ENCODE measurements at regions of chr21 and their contacts with region 1.

Region 1: GRCh38 chr21:37563641-37564340 is 197.2 kb downstream of the DYRK1A start:
- DNase-seq: peak; percentile 91
- H3K4me3 Mint-ChIP-seq: peak overlapping the region; percentile 86
- H3K27ac Mint-ChIP-seq: peak overlapping the region; percentile 98
- H3K4me1 Mint-ChIP-seq: peaks cover 17% of the 10 kb centered on the region
- H3K27me3 Mint-ChIP-seq: peaks cover 6% of the 10 kb centered on the region

Region 2: GRCh38 chr21:36966066-36966820 is 597.5 kb before region 1 on chr21 and contains the start of gene HLCS:
- intact Hi-C with region 1: loop called (anchors 10 kb)
- DNase-seq: peak; percentile 66
- H3K4me3 Mint-ChIP-seq: peak within 1 kb of the TSS; percentile 84
- H3K27ac Mint-ChIP-seq: peak within 1 kb of the TSS; percentile 80
- H3K4me1 Mint-ChIP-seq: peaks cover 20% of the 10 kb centered on the region
- H3K27me3 Mint-ChIP-seq: no peaks in the 10 kb centered on the region
- total RNA-seq, gene HLCS: 17.2 and 18.7 TPM in 2 replicates

Region 3: GRCh38 chr21:37267269-37268184 is 296.3 kb before region 1 on chr21 and contains the start of gene VPS26C:
- intact Hi-C with region 1: loop called (anchors 1 kb)
- DNase-seq: peak; percentile 99
- H3K4me3 Mint-ChIP-seq: peak within 1 kb of the TSS; percentile 96
- H3K27ac Mint-ChIP-seq: peak within 1 kb of the TSS; percentile 97
- H3K4me1 Mint-ChIP-seq: peaks cover 30% of the 10 kb centered on the region
- H3K27me3 Mint-ChIP-seq: peaks cover 2% of the 10 kb centered on the region
- total RNA-seq, gene VPS26C: 58.0 and 59.4 TPM in 2 replicates

Region 4: DNA sequence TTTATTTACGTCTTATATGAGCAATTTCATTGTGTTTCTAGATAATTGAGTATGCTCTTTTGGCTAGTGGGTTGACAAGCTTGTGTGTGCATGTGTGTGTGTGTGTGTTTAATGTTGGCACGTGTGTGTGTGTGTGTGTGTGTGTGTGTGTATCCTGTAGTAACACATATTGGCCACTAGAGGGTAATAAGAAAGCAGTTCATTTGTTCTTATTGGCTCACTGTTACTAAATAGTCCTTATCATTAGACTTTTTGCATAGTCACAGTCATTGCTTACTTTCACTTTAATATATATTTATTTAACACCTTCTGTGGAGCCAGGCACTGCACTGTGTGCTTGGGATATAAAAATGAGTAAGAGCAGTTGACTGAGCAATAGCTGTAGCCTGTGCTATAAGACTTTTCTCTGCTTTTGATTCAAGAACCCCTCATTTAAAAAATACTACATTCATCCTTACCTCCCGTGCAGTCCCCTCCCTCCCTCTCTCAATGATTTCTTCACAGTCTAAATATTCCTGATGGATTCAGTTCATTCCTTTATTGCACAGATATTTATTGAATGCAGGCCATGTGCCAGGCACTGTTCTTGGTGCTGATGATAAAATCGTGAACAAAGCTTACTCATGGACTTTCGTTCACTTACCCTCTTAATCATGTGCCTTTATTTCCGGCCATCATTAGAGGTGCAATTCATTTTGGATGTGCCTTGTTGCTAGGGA is 100.5 kb before region 1 on chr21:
- intact Hi-C with region 1: loop called (anchors 5 kb)
- DNase-seq: no peak
- H3K4me3 Mint-ChIP-seq: no peak overlapping the region
- H3K27ac Mint-ChIP-seq: peak overlapping the region; percentile 48
- H3K4me1 Mint-ChIP-seq: peaks cover 54% of the 10 kb centered on the region
- H3K27me3 Mint-ChIP-seq: no peaks in the 10 kb centered on the region

Region 5: GRCh38 chr21:37503848-37504467 is 59.8 kb before region 1 on chr21:
- intact Hi-C with region 1: loop called (anchors 5 kb)
- DNase-seq: no peak
- H3K4me3 Mint-ChIP-seq: no peak overlapping the region
- H3K27ac Mint-ChIP-seq: peak overlapping the region; percentile 92
- H3K4me1 Mint-ChIP-seq: peaks cover 18% of the 10 kb centered on the region
- H3K27me3 Mint-ChIP-seq: no peaks in the 10 kb centered on the region

Region 6: GRCh38 chr21:37700641-37701202 is 136.9 kb after region 1 on chr21:
- intact Hi-C with region 1: no loop called
- DNase-seq: no peak
- H3K4me3 Mint-ChIP-seq: no peak overlapping the region
- H3K27ac Mint-ChIP-seq: no peak overlapping the region
- H3K4me1 Mint-ChIP-seq: no peaks in the 10 kb centered on the region
- H3K27me3 Mint-ChIP-seq: peaks cover 3% of the 10 kb centered on the region

Region 7: GRCh38 chr21:37724201-37724600 is 160.4 kb after region 1 on chr21:
- intact Hi-C with region 1: no loop called
- DNase-seq: no peak
- H3K4me3 Mint-ChIP-seq: no peak overlapping the region
- H3K27ac Mint-ChIP-seq: no peak overlapping the region
- H3K4me1 Mint-ChIP-seq: no peaks in the 10 kb centered on the region
- H3K27me3 Mint-ChIP-seq: no peaks in the 10 kb centered on the region

Region 8: DNA sequence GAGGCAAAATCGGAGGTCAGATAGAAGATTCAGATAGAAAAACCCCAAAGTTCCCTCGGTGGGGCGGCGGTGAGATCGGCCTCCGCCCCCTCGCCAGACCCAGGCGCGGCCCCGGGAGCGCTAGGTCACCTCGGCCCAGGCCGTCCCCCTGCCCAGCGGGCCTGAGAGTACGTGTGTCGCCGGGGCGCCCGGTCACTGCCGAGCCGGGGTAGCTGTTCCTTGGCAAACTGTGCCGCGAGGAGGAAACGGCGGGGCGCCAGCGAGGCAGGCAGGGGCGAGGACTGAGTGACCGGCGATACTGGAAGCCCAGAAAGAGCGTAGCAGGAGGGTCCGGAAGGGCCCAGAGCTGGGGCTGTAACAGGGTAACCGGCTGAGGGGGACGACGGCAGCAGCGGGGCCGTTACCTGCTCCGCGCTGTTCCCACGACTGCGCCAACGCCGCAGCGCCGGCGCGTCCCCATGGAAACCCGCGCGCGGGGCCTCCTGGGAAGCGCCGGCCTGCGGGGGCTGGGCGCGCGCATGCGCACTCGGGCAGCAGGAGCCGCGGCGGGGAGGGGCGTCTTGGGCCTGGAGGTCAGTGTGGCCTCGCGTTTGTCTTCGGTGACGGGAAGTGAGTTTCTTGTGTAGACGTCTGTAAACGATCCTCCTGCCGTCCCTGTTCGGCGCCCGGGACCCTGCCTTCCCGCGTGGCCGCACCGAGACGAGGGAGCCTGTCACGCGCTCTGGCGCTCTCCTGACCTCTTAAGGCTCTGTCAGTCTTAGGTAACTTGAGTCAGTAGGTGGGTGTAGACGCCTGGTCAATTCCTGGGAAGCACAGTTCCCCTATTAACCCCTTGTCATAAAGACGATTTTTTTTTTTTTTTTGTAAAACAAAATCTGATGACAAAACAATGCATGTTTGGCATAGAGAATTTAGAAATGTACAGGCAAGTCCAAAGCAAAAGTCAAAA is 1881.8 kb after region 1 on chr21 and contains the start of gene LCA5L:
- intact Hi-C with region 1: loop called (anchors 5 kb)
- DNase-seq: peak; percentile 88
- H3K4me3 Mint-ChIP-seq: peak within 1 kb of the TSS; percentile 89
- H3K27ac Mint-ChIP-seq: peak within 1 kb of the TSS; percentile 88
- H3K4me1 Mint-ChIP-seq: peaks cover 12% of the 10 kb centered on the region
- H3K27me3 Mint-ChIP-seq: peaks cover 40% of the 10 kb centered on the region
- total RNA-seq, gene LCA5L: 0.32 TPM in 1 of 2 replicates, not detected in the other

Measured in activated T-helper 2 cell treated with anti-CD3 and anti-CD28 coated beads, Interferon-gamma antibody, Interleukin-2, Interleukin-4, amounts not matched to agents 10 μg/mL and 5 μg/mL and 100 μg/mL, durations not matched to agents 14 hours and 24 hours and 36 hours (primary cell).